ENCODE measurements at regions of chr2 and their contacts with region 1.

Region 1: DNA sequence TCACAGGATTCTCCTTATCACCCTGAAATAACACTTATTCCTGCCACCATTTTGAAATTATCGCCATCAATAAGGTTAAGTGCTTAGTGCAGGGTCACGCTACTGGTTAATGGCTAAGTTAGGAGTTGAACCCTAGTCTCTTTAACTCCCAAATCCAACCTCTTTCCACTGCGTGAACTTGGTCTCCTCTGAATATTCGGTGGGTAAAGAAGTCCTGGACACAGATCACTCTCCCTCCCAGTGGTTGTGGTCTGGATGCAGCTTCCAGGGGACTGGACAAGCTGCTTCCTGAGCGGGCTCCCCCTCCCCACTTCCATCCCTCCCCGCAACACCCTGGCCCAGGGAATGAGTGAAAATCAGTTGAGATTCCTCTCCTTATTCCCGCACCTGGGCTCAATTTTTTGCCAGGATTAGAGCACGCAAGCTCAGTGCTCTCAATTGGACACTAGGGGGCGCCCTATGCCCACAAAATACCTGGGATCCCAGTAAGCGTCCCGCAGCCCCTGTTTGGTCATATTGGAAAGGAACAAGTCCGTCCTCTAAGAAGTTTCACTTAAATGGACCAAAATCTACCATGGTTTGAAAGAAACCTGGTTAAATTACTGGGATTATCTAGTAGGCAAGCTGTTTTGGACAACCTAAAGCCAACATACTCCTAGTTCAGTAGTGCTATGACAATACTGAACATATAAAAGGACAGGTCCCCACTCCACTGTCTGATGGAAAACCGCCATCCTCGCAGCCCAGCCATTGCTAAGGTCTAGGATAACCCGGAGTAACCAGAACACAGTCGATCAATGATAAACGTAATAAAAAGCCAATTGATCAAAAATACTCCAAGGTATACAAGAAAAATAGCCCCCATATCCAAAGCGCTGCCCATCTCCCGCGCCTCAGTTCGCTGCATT is 40.4 kb downstream of the DHRS9 start:
- DNase-seq: peak; percentile 42
- ATAC-seq: peak; percentile 96
- H3K4me3 ChIP-seq: peak overlapping the region in 1 of 2 experiments; percentile 25; a peak in 1 of 4 replicates
- H3K27ac ChIP-seq: no peak overlapping the region
- H3K4me1 ChIP-seq: no peaks in the 10 kb centered on the region; the same call in 1 of the 2 replicates
- H3K27me3 ChIP-seq: peaks cover 2% of the 10 kb centered on the region; the same call in 1 of the 2 replicates
- CTCF ChIP-seq: peak; percentile 90

Region 2: DNA sequence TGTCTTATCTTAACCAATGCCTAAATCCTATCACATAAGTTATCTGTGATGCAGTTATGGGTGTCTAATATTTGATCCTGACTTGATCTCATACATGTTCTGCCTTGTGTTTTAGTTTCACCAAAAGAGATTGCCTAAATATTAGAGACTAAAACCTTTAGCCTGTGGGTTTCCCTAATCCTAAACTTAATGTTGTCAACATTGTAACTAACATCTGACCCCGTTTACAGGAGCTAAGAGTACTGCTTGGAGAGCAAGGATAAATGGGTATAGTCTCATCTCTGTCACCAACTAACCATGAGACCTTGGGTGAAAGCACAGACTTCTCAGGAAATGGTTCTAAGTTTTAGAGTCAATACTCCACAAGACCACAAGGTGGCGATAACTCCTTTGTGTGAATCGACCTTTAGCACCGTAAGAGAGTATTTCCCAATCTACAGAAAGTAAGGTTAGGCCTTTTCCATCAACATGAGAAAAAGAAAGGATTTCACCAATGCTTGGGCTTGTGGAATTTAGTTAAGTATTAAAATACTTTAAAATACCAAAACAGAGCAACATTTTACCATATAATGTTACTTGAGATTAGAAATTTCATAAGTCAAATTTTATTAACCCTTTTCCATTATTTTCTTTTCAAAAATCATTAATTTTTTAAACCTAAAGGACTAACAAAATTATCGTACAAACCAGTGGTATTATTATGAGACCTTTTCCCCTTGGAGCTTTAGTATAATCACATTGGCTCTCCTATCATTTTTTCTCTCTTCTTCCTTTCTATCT is 148.1 kb before region 1 on chr2:
- CTCF ChIA-PET with region 1: no interaction called
- POLR2A ChIA-PET with region 1: no interaction called
- in situ Hi-C with region 1: no loop called
- intact Hi-C with region 1: loop called (anchors 10 kb)
- DNase-seq: peak; percentile 74
- ATAC-seq: peak; percentile 83
- H3K4me3 ChIP-seq: no peak overlapping the region
- H3K27ac ChIP-seq: no peak overlapping the region
- H3K4me1 ChIP-seq: no peaks in the 10 kb centered on the region
- H3K27me3 ChIP-seq: peaks cover 2% of the 10 kb centered on the region
- CTCF ChIP-seq: peak; percentile 82

Region 3: DNA sequence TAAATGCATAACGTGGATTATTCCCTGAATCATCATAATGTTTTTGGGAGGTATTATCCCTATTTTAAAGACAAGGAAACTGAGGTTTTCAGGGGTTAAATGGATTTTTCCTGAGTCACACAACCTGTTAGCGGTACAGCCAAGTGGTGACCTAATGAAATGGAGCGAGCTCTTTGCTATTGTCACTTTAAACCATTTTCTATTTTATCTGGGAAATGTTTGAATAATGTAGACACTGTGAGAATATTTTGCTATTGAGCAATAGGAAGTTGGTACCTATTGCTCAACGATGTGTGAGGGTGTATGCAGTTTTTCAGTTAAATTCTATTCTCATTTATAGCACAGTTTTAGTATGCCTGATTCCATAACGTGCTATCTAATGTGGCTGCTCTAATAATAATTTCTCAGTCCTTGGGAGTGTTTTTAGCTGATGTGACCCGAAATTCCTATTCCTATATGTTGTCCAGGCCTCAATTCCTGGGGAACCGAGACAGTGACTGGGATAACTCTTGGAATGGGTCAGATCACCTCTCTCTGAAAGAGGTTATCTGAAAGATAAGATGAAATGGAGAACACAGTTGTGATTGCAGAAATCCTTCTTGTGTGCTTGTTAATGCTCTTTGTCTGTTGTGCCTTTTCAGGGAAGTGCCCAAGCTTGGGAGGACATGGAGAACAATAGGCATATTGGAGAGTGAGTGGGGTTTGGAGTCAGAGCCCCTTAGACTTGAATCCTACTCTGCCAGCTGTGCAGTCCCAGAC is 117.0 kb before region 1 on chr2:
- CTCF ChIA-PET with region 1: no interaction called
- POLR2A ChIA-PET with region 1: no interaction called
- in situ Hi-C with region 1: no loop called
- intact Hi-C with region 1: no loop called
- DNase-seq: no peak
- ATAC-seq: no peak
- H3K4me3 ChIP-seq: no peak overlapping the region
- H3K27ac ChIP-seq: no peak overlapping the region
- H3K4me1 ChIP-seq: no peaks in the 10 kb centered on the region
- H3K27me3 ChIP-seq: peaks cover 2% of the 10 kb centered on the region
- CTCF ChIP-seq: no peak

Region 4: DNA sequence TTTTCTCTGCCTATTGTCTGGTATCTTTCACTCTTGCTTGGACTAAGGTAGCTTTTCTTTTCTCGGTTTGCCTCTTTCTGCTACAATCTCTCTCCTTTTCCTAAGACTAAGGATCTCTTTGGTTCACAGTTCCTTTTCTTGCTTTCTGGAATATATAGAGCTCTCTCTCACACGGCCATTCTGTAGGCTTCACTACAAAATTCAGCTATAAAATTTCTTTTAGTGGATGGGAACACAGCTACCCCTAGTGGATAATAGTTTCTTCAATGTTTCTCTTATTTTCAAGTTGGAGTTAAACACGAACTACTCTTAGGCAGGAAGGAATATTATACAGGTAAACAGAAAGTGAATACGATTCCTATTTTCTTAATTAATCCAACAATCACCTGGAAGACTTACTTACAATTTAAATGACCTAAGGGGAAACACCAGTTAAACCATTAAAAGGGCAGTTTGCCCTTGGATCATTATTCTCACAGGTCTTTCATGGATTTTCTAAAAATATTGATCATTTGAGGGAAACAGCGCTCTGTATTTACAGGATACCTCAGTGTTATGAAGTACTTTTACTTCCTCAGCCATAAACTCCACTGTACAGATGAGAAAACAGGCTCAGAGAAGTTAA is 112.1 kb after region 1 on chr2:
- CTCF ChIA-PET with region 1: interaction called, 8 read pairs
- POLR2A ChIA-PET with region 1: no interaction called
- in situ Hi-C with region 1: no loop called
- intact Hi-C with region 1: loop called (anchors 5 kb)
- DNase-seq: no peak
- ATAC-seq: 0 out of 2 replicates have a peak, but pooled peaks have one; percentile 34
- H3K4me3 ChIP-seq: no peak overlapping the region
- H3K27ac ChIP-seq: no peak overlapping the region
- H3K4me1 ChIP-seq: no peaks in the 10 kb centered on the region
- H3K27me3 ChIP-seq: peaks cover 6% of the 10 kb centered on the region
- CTCF ChIP-seq: peak; percentile 64; the same call in 1 of the 2 replicates

Region 5: GRCh38 chr2:169275696-169276444 is 166.1 kb after region 1 on chr2:
- CTCF ChIA-PET with region 1: no interaction called
- POLR2A ChIA-PET with region 1: no interaction called
- in situ Hi-C with region 1: no loop called
- intact Hi-C with region 1: loop called (anchors 10 kb)
- DNase-seq: no peak
- ATAC-seq: no peak
- H3K4me3 ChIP-seq: no peak overlapping the region
- H3K27ac ChIP-seq: no peak overlapping the region
- H3K4me1 ChIP-seq: no peaks in the 10 kb centered on the region
- H3K27me3 ChIP-seq: peaks cover 9% of the 10 kb centered on the region; the same call in 1 of the 2 replicates
- CTCF ChIP-seq: peak; percentile 46; the same call in 1 of the 2 replicates

Region 6: DNA sequence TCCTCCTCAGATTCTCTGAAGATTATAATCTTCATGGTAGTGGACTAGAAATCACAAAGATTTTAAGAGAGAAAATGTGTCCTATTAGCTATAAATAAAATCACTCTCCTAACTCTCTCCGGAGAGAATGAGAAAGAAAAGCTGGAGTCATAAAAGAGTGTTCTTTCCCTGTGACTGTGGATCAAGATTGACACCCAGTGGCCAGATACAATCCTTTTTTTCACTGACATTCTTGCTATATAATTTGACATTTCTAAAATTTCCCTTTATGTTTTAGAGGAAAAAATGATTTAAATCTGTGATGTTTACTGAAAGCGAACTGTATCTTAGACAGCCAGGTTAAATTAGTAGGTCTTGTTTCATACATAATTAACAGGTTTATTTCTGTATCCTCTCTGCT is 287.9 kb after region 1 on chr2:
- CTCF ChIA-PET with region 1: interaction called, 4 read pairs
- POLR2A ChIA-PET with region 1: no interaction called
- in situ Hi-C with region 1: no loop called
- intact Hi-C with region 1: loop called (anchors 5 kb)
- DNase-seq: no peak
- ATAC-seq: peak; percentile 69; the same call in 1 of the 2 replicates
- H3K4me3 ChIP-seq: no peak overlapping the region
- H3K27ac ChIP-seq: no peak overlapping the region
- H3K4me1 ChIP-seq: no peaks in the 10 kb centered on the region
- H3K27me3 ChIP-seq: peaks cover 15% of the 10 kb centered on the region; the same call in 1 of the 2 replicates
- CTCF ChIP-seq: peak; percentile 59; the same call in 1 of the 2 replicates

Measured in Panc1 (cell line).